Gastrocnemius medialis (tissue), 4 donors: ENCODE measurements at regions of chr6 and their contacts with region 1.

Region 1: DNA sequence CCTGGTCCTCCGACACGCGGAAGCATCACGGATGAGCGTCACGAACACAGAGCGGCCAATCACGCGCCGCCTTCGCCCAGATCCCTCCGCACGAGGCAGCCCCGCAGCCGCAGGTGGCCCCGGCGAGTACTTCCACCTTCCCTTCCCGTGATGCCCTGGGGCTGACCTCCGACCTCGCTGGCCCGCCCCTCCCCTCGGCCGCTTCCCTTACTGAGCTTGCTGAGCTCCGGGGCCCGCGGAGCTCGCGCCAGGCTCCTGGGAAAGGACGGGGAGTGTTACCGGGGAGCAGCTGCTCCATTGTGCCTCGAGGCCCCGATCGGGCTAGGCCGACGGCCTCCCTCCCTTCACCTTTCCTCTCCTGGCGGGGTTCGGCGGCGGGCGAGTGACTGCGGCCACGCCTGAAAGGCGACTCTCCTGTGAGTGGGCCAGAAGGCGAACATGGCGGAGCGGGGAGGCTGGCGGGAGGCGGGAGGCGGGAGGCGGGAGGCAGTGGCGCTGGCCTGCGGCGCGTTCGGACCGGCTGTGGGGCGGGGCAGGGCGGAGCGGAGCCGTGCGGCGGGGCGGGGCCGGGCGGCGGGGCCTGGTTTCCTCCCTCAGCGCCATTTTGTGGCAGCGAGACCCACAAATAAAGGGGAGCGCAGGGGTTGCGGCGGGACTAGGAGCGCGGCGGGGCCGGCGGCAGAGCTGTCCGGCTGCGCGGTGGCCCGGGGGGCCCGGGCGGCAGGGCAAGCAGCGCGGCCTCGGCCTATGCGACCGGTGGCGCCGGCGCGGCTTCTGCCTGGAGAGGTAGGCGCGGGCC is at the start of gene WTAP:
- DNase-seq: peak; percentile 97 to 98
- ATAC-seq: peak; percentile 82 to 88
- H3K4me3 ChIP-seq: peak within 1 kb of the TSS; percentile 86 to 99 (median 90)
- H3K27ac ChIP-seq: peak within 1 kb of the TSS; percentile 99 to 100 (median 99)
- H3K4me1 ChIP-seq: peaks cover 49 to 50% of the 10 kb centered on the region in 2 donors
- H3K27me3 ChIP-seq: no peaks in the 10 kb centered on the region
- CTCF ChIP-seq: peak in 1 of 5 experiments; percentile 40
- POLR2A ChIP-seq: peak; percentile 75 to 93
- total RNA-seq, gene WTAP: 147 to 238 (median 193) TPM

Region 2: GRCh38 chr6:159761873-159762680 is 35.0 kb after region 1 on chr6 and contains the start of gene ACAT2:
- in situ Hi-C with region 1: no loop called
- intact Hi-C with region 1: loop called (anchors 2 kb)
- DNase-seq: peak; percentile 95 to 96
- ATAC-seq: peak; percentile 98 to 99
- H3K4me3 ChIP-seq: peak within 1 kb of the TSS; percentile 84 to 90 (median 88)
- H3K27ac ChIP-seq: peak within 1 kb of the TSS; percentile 96 to 99 (median 96)
- H3K4me1 ChIP-seq: peaks cover 13 to 19% of the 10 kb centered on the region in 2 donors
- H3K27me3 ChIP-seq: no peaks in the 10 kb centered on the region
- CTCF ChIP-seq: peak in 2 of 5 experiments; percentile 8 to 40
- POLR2A ChIP-seq: peak; percentile 47 to 68
- total RNA-seq, gene ACAT2: 0.59 to 4.6 (median 2.4) TPM